ENCODE measurements at regions of chr6 and their contacts with region 1.

Region 1: GRCh38 chr6:31568537-31568961 is 3.5 kb upstream of the LTA start:
- DNase-seq: peak; percentile 94
- ATAC-seq: peak; percentile 77
- H3K4me3 ChIP-seq: peak overlapping the region; percentile 41; the same call in 1 of the 2 replicates
- H3K27ac ChIP-seq: peak overlapping the region; percentile 90
- H3K4me1 ChIP-seq: peaks cover 64% of the 10 kb centered on the region
- H3K27me3 ChIP-seq: no peaks in the 10 kb centered on the region
- CTCF ChIP-seq: no peak
- EP300 ChIP-seq: peak; percentile 54 to 69; a peak in 2 of 4 replicates
- POLR2A ChIP-seq: no peak
- RAD21 ChIP-seq: no peak

Region 2: GRCh38 chr6:31580807-31581433 is 12.4 kb after region 1 on chr6:
- CTCF ChIA-PET with region 1: interaction called, 2,098 read pairs
- POLR2A ChIA-PET with region 1: interaction called, 255 read pairs
- RAD21 ChIA-PET with region 1: interaction called, 53 read pairs
- SMC1A ChIA-PET with region 1: interaction called, 1,989 read pairs
- in situ Hi-C with region 1: no loop called
- intact Hi-C with region 1: no loop called
- DNase-seq: no peak
- ATAC-seq: peak; percentile 83
- H3K4me3 ChIP-seq: peak overlapping the region; percentile 93
- H3K27ac ChIP-seq: peak overlapping the region; percentile 91
- H3K4me1 ChIP-seq: peaks cover 41% of the 10 kb centered on the region
- H3K27me3 ChIP-seq: no peaks in the 10 kb centered on the region
- CTCF ChIP-seq: peak; percentile 96 to 97 (median 97)
- EP300 ChIP-seq: no peak
- POLR2A ChIP-seq: peak; percentile 87
- RAD21 ChIP-seq: peak; percentile 67

Region 3: DNA sequence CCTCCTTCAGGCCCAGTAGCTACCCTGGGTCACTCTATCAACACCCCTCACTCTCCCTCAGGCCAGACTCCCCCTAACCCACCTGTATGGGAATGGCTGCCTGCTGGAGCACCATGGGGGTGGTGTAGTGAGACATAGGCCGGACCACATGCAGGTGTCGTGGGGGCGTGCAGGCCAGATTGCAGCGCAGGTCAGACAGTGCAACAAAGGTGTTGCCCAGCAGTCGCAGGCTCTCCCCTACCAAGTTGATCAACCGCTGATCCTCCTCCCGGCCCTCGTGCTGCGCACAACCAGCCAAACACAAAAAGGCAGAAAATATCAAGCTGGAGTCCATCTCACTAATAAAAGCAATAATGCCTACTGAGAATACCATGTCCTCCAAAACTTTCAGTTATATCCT is 76.8 kb after region 1 on chr6:
- CTCF ChIA-PET with region 1: no interaction called
- POLR2A ChIA-PET with region 1: no interaction called
- RAD21 ChIA-PET with region 1: no interaction called
- SMC1A ChIA-PET with region 1: no interaction called
- in situ Hi-C with region 1: no loop called
- intact Hi-C with region 1: no loop called
- DNase-seq: no peak
- ATAC-seq: no peak
- H3K4me3 ChIP-seq: no peak overlapping the region
- H3K27ac ChIP-seq: no peak overlapping the region
- H3K4me1 ChIP-seq: no peaks in the 10 kb centered on the region
- H3K27me3 ChIP-seq: no peaks in the 10 kb centered on the region
- CTCF ChIP-seq: no peak
- EP300 ChIP-seq: no peak
- POLR2A ChIP-seq: no peak
- RAD21 ChIP-seq: no peak

Measured in GM12878 (cell line).